T-cell (primary cell): ENCODE measurements at regions of chr1 and their contacts with region 1.

Region 1: GRCh38 chr1:183506561-183506960 is 34.3 kb downstream of the SMG7 start:
- DNase-seq: no peak
- ATAC-seq: no peak
- H3K4me3 ChIP-seq: no peak overlapping the region
- H3K4me3 Mint-ChIP-seq: no peak overlapping the region
- H3K27ac ChIP-seq: no peak overlapping the region
- H3K27ac Mint-ChIP-seq: no peak overlapping the region
- H3K4me1 ChIP-seq: peaks cover 0 to 14% of the 10 kb centered on the region in 2 experiments
- H3K4me1 Mint-ChIP-seq: peaks cover 24 to 49% (median 36%) of the 10 kb centered on the region in 3 donors
- H3K27me3 ChIP-seq: no peaks in the 10 kb centered on the region
- H3K27me3 Mint-ChIP-seq: no peaks in the 10 kb centered on the region

Region 2: GRCh38 chr1:183349201-183349711 is 157.3 kb before region 1 on chr1:
- CTCF ChIA-PET with region 1: no interaction called
- POLR2A ChIA-PET with region 1: interaction called in 1 of 2 experiments, 11 read pairs
- DNase-seq: no peak
- ATAC-seq: no peak
- H3K4me3 ChIP-seq: no peak overlapping the region
- H3K4me3 Mint-ChIP-seq: no peak overlapping the region
- H3K27ac ChIP-seq: no peak overlapping the region
- H3K27ac Mint-ChIP-seq: no peak overlapping the region
- H3K4me1 ChIP-seq: no peaks in the 10 kb centered on the region
- H3K4me1 Mint-ChIP-seq: no peaks in the 10 kb centered on the region
- H3K27me3 ChIP-seq: peaks cover 0 to 7% of the 10 kb centered on the region in 2 experiments
- H3K27me3 Mint-ChIP-seq: peaks cover 6 to 18% of the 10 kb centered on the region in 2 donors

Region 3: GRCh38 chr1:183487674-183488442 is 18.7 kb before region 1 on chr1:
- CTCF ChIA-PET with region 1: interaction called, 3 to 7 read pairs
- POLR2A ChIA-PET with region 1: interaction called in 1 of 2 experiments, 10 read pairs
- DNase-seq: no peak
- ATAC-seq: no peak
- H3K4me3 ChIP-seq: no peak overlapping the region
- H3K4me3 Mint-ChIP-seq: no peak overlapping the region
- H3K27ac ChIP-seq: no peak overlapping the region
- H3K27ac Mint-ChIP-seq: no peak overlapping the region
- H3K4me1 ChIP-seq: peaks cover 0 to 2% of the 10 kb centered on the region in 2 experiments
- H3K4me1 Mint-ChIP-seq: peaks cover 76 to 82% (median 76%) of the 10 kb centered on the region in 3 donors
- H3K27me3 ChIP-seq: no peaks in the 10 kb centered on the region
- H3K27me3 Mint-ChIP-seq: no peaks in the 10 kb centered on the region

Region 4: GRCh38 chr1:183543619-183544204 is 37.2 kb after region 1 on chr1:
- CTCF ChIA-PET with region 1: interaction called in 1 of 2 experiments, 13 read pairs
- POLR2A ChIA-PET with region 1: no interaction called
- DNase-seq: peak in 14 of 35 experiments; percentile 1 to 67 (median 10)
- ATAC-seq: peak; percentile 65 to 93 (median 74)
- H3K4me3 ChIP-seq: no peak overlapping the region
- H3K4me3 Mint-ChIP-seq: no peak overlapping the region
- H3K27ac ChIP-seq: no peak overlapping the region
- H3K27ac Mint-ChIP-seq: peak overlapping the region in 1 of 2 donors; percentile 55
- H3K4me1 ChIP-seq: no peaks in the 10 kb centered on the region
- H3K4me1 Mint-ChIP-seq: peaks cover 1 to 7% (median 5%) of the 10 kb centered on the region in 3 donors
- H3K27me3 ChIP-seq: no peaks in the 10 kb centered on the region
- H3K27me3 Mint-ChIP-seq: no peaks in the 10 kb centered on the region